Common myeloid progenitor, CD34-positive (primary cell): ENCODE measurements at regions of chr12 and their contacts with region 1.

Region 1: DNA sequence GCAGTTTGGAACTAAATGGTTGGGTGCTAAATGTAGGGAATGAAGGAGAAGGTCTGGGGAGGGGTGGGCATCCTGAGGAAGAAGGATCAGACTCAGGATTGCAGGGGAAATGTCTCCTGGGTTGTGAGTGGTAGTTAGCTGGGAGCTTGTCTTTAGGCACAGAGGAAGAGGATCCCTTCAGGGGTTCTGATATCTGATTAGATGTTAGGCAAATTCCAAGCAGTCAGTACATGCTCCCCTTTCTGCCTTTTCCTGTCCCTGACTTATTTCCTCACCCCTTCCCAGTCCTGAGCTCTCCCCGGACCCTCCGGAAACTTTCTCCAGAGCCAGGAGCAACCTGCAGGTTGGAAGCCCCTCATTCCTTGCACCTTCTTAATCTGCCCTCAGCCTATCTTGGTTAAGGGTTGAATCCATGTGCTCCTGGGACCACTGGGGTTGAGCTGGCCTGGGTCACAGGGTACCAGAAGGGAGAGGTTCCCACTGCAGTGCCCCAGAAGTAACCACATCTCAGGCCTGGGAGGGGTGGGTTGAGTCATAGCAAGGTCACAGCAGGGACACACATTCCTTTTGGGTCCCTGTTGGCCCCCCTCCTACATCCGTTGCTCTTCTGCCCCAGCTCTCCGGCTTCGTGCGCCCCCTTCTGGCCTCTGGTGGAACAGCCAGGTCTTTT is 1.6 kb downstream of the IGFBP6 start:
- DNase-seq: peak; percentile 88 to 95 (median 95)
- H3K4me3 ChIP-seq: peak overlapping the region in 3 of 7 experiments; percentile 19 to 77 (median 20)
- H3K27ac ChIP-seq: no peak overlapping the region
- H3K4me1 ChIP-seq: peaks cover 7 to 56% (median 50%) of the 10 kb centered on the region in 4 experiments
- H3K27me3 ChIP-seq: no peaks in the 10 kb centered on the region

Region 2: DNA sequence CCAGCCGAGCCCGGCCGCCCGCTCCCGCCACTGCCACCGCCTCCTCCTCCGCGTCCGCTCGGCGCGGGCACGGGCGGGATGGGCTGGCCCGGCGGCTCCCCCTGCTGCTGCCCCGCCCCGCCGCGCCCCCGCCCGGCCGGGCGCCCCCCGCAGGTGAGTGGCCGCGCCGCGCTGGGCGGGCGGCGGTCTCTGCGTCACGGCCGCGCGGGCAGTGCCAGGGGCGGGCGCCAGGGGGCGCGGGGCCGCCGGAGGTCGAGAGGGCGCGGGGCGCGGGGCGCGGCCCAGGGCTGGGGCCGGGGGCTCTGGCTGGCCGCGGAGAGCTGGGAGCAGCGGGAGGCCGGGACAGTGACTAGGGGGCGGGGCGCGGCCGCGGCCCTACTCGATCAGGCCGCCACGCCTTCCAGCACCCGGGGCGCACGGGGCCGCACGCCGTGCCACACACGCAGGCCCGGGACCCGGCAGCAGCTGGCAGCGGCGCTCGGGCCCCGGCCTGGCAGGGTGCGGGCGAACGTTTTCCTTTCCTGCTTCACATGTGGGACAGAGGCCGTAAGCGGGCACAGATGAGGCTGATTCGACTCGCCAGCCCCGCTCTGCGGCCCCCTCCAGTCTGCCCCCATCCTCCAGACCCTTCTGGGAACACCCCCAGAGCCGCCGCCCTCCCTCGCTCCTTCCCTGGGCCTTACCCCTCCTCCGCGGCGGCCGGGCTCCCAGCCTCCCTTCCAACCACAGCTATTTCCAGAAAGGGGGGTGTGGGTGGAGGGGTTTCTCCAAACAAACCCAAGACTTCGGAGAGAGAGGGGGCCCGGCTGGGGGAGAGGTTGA is 51.7 kb before region 1 on chr12:
- CTCF ChIA-PET with region 1: interaction called, 16 read pairs
- POLR2A ChIA-PET with region 1: interaction called, 3 read pairs
- DNase-seq: peak; percentile 46 to 76 (median 69)
- H3K4me3 ChIP-seq: peak overlapping the region; percentile 48 to 89 (median 79)
- H3K27ac ChIP-seq: peak overlapping the region in 1 of 2 experiments; percentile 34
- H3K4me1 ChIP-seq: peaks cover 0 to 29% (median 20%) of the 10 kb centered on the region in 4 experiments
- H3K27me3 ChIP-seq: peaks cover 0 to 1% (median 0%) of the 10 kb centered on the region in 5 experiments

Region 3: DNA sequence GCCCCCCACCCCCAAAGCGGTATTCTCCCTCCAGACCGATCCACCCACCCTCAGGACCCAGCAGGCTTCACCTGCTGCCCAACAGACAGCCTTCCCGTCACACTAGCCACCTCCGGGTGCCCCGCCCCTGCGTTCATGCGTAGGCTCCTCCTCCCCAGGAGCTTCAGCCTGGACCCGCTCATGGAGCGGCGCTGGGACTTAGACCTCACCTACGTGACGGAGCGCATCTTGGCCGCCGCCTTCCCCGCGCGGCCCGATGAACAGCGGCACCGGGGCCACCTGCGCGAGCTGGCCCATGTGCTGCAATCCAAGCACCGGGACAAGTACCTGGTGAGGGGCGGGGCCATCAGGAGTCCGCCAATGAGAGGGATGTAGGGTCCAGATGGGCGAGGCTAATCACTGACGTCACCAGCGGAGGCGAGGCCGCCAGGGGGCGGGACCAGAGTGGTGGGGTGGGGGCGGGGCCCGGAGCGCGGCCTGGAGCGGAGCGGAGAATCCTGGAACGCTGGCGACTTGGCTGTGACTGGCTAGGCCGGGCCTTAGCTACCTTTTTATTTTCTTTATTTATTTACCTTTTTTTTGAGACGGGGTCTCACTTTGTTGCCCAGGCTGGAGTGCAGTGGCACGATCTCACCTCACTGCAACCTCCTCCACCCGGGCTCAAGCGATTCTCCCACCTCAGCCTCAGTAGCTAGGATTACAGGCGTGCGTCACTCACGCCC is 44.8 kb before region 1 on chr12:
- CTCF ChIA-PET with region 1: interaction called, 361 read pairs
- POLR2A ChIA-PET with region 1: interaction called, 3 read pairs
- DNase-seq: peak; percentile 91 to 95 (median 94)
- H3K4me3 ChIP-seq: peak overlapping the region; percentile 72 to 93 (median 79)
- H3K27ac ChIP-seq: peak overlapping the region in 1 of 2 experiments; percentile 25
- H3K4me1 ChIP-seq: peaks cover 0 to 18% (median 10%) of the 10 kb centered on the region in 4 experiments
- H3K27me3 ChIP-seq: no peaks in the 10 kb centered on the region

Region 4: DNA sequence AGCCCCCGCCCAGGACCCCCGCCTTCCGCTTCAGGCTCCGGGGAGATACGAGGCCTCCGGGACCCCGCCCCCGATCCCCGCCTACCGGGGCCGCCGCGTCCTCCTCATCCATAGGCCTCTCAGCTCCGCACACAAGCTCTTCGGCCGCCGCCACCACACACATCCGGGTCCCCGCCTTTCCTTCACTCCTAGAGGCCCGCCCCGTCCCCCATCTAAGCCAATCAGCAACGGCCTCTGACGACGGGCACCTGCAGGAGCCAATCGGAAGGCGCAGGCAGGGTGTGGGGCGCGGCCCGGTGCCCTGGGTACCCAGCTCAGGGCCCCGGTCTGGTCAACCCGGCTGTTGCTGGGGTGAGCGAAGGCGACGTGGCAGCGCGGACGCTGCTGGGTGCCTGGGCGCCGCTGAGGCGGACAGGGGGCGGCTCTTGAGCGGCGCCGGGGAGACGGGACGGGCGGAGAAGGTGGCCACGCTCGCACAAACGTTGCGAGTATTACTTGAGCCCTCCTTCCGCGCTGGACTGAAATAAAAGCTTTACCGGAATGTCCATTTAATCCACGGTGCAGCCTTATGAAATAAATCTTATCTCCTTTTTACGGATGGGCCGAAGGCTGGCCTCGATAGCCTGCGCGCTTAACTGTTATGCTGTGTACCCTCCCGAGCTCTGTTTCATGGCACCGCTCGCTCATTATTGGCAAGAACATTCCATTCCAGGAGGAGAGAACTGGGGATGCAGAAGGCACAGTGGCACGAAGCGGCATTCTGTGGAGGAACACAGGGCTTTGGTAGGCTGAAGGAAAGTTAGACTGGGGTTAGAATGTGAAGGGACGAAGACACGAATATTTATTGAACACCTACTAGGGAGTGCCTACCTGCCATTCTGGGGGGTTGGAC is 19.6 kb before region 1 on chr12 and contains the start of gene SPRYD3:
- CTCF ChIA-PET with region 1: interaction called, 361 read pairs
- POLR2A ChIA-PET with region 1: interaction called, 16 read pairs
- DNase-seq: peak; percentile 94 to 98 (median 97)
- H3K4me3 ChIP-seq: peak within 1 kb of the TSS; percentile 55 to 89 (median 77)
- H3K27ac ChIP-seq: peak within 1 kb of the TSS; percentile 66 to 88
- H3K4me1 ChIP-seq: peaks cover 3 to 16% (median 10%) of the 10 kb centered on the region in 4 experiments
- H3K27me3 ChIP-seq: no peaks in the 10 kb centered on the region

Region 5: GRCh38 chr12:53086361-53086760 is 12.8 kb before region 1 on chr12:
- CTCF ChIA-PET with region 1: interaction called, 26 read pairs
- POLR2A ChIA-PET with region 1: interaction called, 4 read pairs
- DNase-seq: no peak
- H3K4me3 ChIP-seq: no peak overlapping the region
- H3K27ac ChIP-seq: no peak overlapping the region
- H3K4me1 ChIP-seq: no peaks in the 10 kb centered on the region
- H3K27me3 ChIP-seq: no peaks in the 10 kb centered on the region

Region 6: DNA sequence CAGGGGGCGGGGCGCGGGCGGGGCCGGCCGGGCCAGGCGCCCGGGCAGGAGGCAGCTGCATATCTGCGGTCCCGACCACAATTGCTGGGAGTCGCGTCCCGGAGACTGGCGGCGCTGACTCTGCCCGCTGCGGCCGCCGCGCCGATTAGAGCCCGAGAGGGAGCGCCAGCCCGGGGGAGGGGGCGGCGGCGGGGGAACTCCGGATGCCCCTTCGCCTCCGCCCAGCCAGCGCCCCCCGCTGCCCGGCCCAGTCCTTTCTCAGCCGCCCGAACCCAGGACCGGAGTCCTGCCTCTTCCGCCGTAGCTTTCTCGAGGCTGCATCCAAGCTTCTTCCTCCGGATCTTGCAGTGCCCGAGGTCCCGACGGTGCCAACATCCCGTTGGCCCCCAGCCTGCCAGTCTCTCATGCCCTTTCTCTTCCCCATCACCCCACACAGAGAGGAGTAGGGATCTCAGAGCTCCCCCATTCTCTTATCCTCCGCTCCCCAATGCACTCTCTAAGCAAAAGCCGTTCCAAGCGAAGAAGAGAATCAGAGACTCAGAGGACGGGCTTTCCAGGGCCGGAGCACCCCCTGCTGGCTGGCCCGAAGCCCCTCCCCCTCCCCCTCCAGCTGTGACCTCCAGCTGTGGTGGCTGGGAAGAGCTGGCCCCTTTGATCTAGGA is 245.8 kb after region 1 on chr12:
- CTCF ChIA-PET with region 1: no interaction called
- POLR2A ChIA-PET with region 1: no interaction called
- DNase-seq: peak; percentile 79 to 82 (median 80)
- H3K4me3 ChIP-seq: peak overlapping the region; percentile 45 to 91 (median 77)
- H3K27ac ChIP-seq: no peak overlapping the region
- H3K4me1 ChIP-seq: peaks cover 0 to 22% (median 17%) of the 10 kb centered on the region in 4 experiments
- H3K27me3 ChIP-seq: peaks cover 0 to 2% (median 0%) of the 10 kb centered on the region in 5 experiments